HCT116 (cell line): ENCODE measurements at regions of chr9 and their contacts with region 1.

Region 1: DNA sequence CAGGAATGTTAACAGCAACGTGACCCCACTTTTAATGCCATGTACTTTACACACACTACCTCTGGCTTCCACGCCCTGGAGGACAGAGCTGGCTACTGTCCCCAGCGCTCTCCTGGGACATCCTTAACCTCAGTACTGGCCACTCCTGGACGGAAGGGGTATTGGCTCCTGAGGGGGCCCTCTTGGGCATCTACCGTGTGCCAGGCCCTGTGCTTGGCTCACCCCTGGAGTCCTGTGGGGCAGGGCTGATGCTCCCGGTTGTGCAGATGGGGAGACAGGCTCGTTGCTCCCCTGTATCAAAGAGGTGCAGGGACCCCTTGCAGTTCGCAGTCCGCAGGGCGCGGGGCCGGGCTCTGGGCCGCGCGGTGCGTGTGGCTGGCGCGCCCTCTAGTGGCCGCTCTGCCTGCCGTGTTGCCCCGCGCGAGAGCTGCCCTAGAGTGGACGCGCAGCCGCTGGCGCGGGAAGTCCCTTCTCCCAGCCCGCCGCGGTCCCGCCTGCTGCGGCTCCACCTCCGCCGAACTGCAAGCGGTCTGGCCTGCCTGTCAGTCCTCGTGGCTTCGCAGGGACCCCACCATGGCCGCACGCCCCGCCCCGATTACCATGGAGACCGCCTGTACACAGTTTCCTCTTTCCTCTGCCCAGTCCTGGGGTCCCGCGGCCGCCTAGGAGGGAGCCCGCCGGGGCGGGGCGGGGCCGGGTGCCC is at the start of gene WDR38:
- DNase-seq: peak; percentile 78
- ATAC-seq: peak; percentile 85
- H3K4me3 ChIP-seq: peak within 1 kb of the TSS; percentile 32 to 51
- H3K27ac ChIP-seq: peak within 1 kb of the TSS; percentile 37; the same call in 1 of the 2 replicates
- H3K4me1 ChIP-seq: peaks cover 5 to 30% of the 10 kb centered on the region in 2 experiments; a peak in 3 of 4 replicates
- H3K27me3 ChIP-seq: no peaks in the 10 kb centered on the region
- CTCF ChIP-seq: peak in 2 of 3 experiments; percentile 86 to 99; a peak in 4 of 6 replicates
- POLR2A ChIP-seq: no peak
- RAD21 ChIP-seq: no peak
- total RNA-seq, gene WDR38: not detected

Region 2: DNA sequence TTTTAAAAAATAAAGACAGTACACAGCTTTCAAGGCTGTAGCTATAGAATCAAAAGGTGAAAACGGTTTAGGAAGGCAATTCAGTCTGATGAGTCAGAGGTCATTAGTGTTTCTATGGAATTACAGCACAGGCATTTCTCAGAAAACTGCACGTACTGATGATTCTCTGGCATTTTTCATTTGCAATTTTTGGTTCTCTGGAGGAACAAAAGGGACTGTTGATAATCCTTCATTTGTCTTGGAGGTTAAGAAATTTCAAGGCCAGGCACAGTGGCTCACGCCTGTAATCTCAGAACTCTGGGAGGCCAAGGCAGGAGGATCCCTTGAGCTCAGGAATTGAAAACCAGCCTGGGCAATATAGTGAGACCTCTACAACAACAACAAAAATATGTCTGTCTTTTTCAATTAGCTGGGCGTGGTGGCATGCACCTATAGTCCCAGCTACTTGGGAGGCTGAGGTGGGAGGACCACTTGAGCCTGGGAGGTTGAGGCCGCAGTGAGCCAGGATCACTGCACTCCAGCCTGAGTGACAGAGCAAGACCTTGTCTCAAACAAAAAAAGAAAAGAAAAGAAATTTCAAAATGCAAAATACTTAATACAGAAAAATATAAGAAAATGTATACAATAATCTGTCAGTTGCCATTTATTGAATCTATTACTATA is 109.2 kb before region 1 on chr9:
- CTCF ChIA-PET with region 1: interaction called, 10 read pairs
- POLR2A ChIA-PET with region 1: no interaction called
- RAD21 ChIA-PET with region 1: no interaction called
- intact Hi-C with region 1: no loop called
- DNase-seq: no peak
- ATAC-seq: peak; percentile 40
- H3K4me3 ChIP-seq: no peak overlapping the region
- H3K27ac ChIP-seq: no peak overlapping the region
- H3K4me1 ChIP-seq: peaks cover 15 to 41% of the 10 kb centered on the region in 2 experiments
- H3K27me3 ChIP-seq: no peaks in the 10 kb centered on the region
- CTCF ChIP-seq: no peak
- POLR2A ChIP-seq: no peak
- RAD21 ChIP-seq: no peak

Region 3: DNA sequence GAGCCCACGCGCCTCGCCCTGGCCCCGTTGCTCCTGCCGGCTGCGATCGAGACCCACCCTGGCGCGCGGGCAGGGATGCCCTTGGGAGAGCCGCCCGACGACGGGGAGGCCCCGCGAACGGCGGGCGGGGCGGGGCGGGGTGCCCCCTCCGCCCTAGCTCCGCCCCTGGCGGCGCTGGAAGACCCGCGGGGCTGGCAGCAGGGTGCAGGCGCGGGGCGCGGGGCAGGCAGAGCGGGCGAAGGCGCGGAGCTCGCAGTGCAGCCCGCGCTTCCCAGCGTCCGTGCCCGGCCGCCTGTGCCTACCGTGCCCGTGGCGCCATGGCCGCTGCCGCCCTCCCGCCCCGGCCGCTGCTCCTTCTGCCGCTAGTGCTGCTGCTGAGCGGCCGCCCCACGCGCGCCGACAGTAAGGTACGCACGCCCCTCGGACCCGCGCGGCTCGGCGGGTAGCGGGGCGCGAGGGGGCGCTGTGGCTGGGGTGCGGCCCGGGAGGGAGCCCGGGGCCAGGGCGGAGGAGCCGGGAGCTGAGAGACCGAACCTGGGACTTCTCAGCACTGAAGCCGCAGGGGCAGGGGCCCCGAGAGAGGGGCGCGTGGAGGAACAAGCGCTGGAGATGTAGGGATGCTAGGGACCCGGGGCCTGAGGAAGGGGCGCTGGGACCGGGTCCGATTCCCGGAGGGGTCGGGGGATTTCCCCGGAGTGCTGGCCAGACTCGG is 75.9 kb before region 1 on chr9 and contains the start of gene OLFML2A:
- CTCF ChIA-PET with region 1: interaction called, 601 read pairs
- POLR2A ChIA-PET with region 1: interaction called, 30 read pairs
- RAD21 ChIA-PET with region 1: interaction called, 47 to 49 read pairs
- intact Hi-C with region 1: loop called (anchors 1 kb)
- DNase-seq: no peak
- ATAC-seq: peak; percentile 66
- H3K4me3 ChIP-seq: peak within 1 kb of the TSS; percentile 48 to 64
- H3K27ac ChIP-seq: peak within 1 kb of the TSS; percentile 44; the same call in 1 of the 2 replicates
- H3K4me1 ChIP-seq: peaks cover 17 to 40% of the 10 kb centered on the region in 2 experiments
- H3K27me3 ChIP-seq: no peaks in the 10 kb centered on the region
- CTCF ChIP-seq: peak in 2 of 3 experiments; percentile 44 to 53; a peak in 3 of 6 replicates
- POLR2A ChIP-seq: no peak
- RAD21 ChIP-seq: no peak
- total RNA-seq, gene OLFML2A: 6.3 TPM

Region 4: DNA sequence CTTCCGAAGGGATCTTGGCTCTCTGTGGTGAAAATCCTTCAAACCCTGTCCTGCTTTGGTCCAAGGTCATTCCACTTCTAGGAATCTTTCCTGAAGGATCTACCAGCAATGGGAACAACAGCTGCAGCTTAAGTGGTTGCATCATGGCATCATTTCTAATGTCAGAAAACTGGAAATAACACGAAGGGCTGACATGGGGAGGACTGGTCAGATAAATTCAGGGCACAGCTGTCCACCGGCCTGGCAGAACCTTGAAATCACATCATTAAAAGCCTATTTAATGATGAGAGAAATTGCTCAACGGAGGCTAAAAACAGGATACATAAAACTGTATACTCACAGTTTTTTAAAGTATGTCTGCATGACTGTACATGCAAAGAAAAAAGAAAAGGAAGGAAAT is 47.8 kb before region 1 on chr9:
- CTCF ChIA-PET with region 1: interaction called, 15 read pairs
- POLR2A ChIA-PET with region 1: interaction called, 4 read pairs
- RAD21 ChIA-PET with region 1: no interaction called
- intact Hi-C with region 1: no loop called
- DNase-seq: no peak
- ATAC-seq: no peak
- H3K4me3 ChIP-seq: no peak overlapping the region
- H3K27ac ChIP-seq: no peak overlapping the region
- H3K4me1 ChIP-seq: peaks cover 5 to 9% of the 10 kb centered on the region in 2 experiments
- H3K27me3 ChIP-seq: no peaks in the 10 kb centered on the region
- CTCF ChIP-seq: no peak
- POLR2A ChIP-seq: no peak
- RAD21 ChIP-seq: no peak

Region 5: GRCh38 chr9:125143375-125144090 is 290.6 kb after region 1 on chr9 and contains the start of gene SCAI:
- CTCF ChIA-PET with region 1: interaction called, 5 read pairs
- POLR2A ChIA-PET with region 1: no interaction called
- RAD21 ChIA-PET with region 1: interaction called in 1 of 2 experiments, 7 read pairs
- intact Hi-C with region 1: loop called (anchors 5 kb)
- DNase-seq: peak; percentile 98
- ATAC-seq: peak; percentile 99
- H3K4me3 ChIP-seq: peak within 1 kb of the TSS; percentile 63 to 71
- H3K27ac ChIP-seq: no peak within 1 kb of the TSS; the same call in 1 of the 2 replicates
- H3K4me1 ChIP-seq: peaks cover 7 to 12% of the 10 kb centered on the region in 2 experiments; a peak in 3 of 4 replicates
- H3K27me3 ChIP-seq: no peaks in the 10 kb centered on the region
- CTCF ChIP-seq: peak; percentile 83 to 99 (median 97)
- POLR2A ChIP-seq: no peak
- RAD21 ChIP-seq: peak; percentile 88
- total RNA-seq, gene SCAI: 14.0 TPM